Activated T-helper 2 cell treated with anti-CD3 and anti-CD28 coated beads, Interferon-gamma antibody, Interleukin-2, Interleukin-4, amounts not matched to agents 10 μg/mL and 5 μg/mL and 100 μg/mL, durations not matched to agents 14 hours and 24 hours and 36 hours (primary cell): ENCODE measurements at regions of chr17 and their contacts with region 1.

Region 1: GRCh38 chr17:2592971-2593820 is at the start of gene PAFAH1B1:
- DNase-seq: peak; percentile 93
- H3K4me3 Mint-ChIP-seq: peak within 1 kb of the TSS; percentile 94
- H3K27ac Mint-ChIP-seq: peak within 1 kb of the TSS; percentile 91
- H3K4me1 Mint-ChIP-seq: peaks cover 26% of the 10 kb centered on the region
- H3K27me3 Mint-ChIP-seq: peaks cover 3% of the 10 kb centered on the region
- total RNA-seq, gene PAFAH1B1: 151 and 153 TPM in 2 replicates

Region 2: DNA sequence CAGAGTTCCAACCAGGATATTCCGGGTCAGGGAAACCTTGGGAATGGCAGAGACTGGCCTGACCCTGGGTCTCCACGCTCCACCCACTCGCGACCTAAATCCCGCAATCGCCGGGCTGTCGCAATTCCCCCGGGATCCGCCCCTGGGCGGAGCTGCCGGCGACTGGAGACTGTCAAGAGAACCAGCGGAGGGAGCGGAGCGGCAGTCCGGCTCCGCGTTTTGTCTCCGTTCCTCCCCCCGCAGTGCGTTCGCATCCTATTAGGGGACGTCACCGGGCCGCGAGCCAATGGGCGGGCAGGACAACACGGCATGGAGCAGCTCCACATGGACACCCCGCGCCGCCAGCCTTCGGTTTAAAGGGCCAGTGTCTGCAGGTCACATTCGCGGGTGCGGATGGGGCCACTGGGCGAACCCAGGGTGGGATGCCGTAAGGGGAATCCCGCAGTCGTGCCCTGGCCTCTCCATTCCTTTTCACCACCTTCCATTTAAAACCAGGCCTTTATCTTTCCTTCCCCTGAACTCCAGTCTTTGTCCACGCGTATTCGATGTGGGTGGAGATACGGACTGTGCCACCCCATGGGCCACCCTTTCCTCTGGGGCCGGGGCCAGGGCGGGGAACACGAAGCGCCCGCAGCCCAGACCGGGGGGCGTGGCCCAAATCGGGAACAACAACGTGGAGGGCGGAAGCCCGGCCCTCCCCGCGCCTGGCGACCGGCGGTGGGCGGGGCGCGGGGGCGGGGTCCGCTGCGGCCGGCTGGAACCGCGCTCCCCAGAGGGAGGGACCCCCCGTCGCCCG is 191.6 kb before region 1 on chr17:
- intact Hi-C with region 1: loop called (anchors 5 kb)
- DNase-seq: peak; percentile 99
- H3K4me3 Mint-ChIP-seq: peak overlapping the region; percentile 89
- H3K27ac Mint-ChIP-seq: peak overlapping the region; percentile 97
- H3K4me1 Mint-ChIP-seq: peaks cover 44% of the 10 kb centered on the region
- H3K27me3 Mint-ChIP-seq: no peaks in the 10 kb centered on the region

Region 3: GRCh38 chr17:2511462-2512369 is 81.5 kb before region 1 on chr17 and contains the start of gene METTL16:
- intact Hi-C with region 1: loop called (anchors 2 kb)
- DNase-seq: peak; percentile 96
- H3K4me3 Mint-ChIP-seq: no peak within 1 kb of the TSS
- H3K27ac Mint-ChIP-seq: no peak within 1 kb of the TSS
- H3K4me1 Mint-ChIP-seq: peaks cover 17% of the 10 kb centered on the region
- H3K27me3 Mint-ChIP-seq: peaks cover 2% of the 10 kb centered on the region
- total RNA-seq, gene METTL16: 49.1 and 49.2 TPM in 2 replicates

Region 4: DNA sequence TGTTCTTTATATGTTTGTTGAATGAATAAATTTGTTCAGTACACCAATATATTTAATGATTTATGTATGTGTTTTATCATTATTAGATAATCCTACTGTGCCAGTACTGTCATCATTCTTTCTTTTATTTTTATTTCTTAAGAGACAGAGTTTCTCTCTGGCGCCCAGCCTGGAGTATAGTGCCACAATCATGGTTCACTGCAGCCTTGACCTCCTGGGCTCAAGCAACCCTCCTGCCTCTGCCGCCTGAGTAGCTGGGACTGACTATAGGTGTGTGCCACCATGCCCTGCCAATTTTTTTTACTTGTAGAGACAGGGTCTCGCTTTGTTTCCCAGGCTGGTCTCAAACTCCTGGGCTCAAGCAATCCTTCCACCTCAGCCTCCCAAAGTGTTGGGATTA is 42.0 kb after region 1 on chr17:
- intact Hi-C with region 1: loop called (anchors 5 kb)
- DNase-seq: no peak
- H3K4me3 Mint-ChIP-seq: no peak overlapping the region
- H3K27ac Mint-ChIP-seq: no peak overlapping the region
- H3K4me1 Mint-ChIP-seq: peaks cover 28% of the 10 kb centered on the region
- H3K27me3 Mint-ChIP-seq: no peaks in the 10 kb centered on the region

Region 5: DNA sequence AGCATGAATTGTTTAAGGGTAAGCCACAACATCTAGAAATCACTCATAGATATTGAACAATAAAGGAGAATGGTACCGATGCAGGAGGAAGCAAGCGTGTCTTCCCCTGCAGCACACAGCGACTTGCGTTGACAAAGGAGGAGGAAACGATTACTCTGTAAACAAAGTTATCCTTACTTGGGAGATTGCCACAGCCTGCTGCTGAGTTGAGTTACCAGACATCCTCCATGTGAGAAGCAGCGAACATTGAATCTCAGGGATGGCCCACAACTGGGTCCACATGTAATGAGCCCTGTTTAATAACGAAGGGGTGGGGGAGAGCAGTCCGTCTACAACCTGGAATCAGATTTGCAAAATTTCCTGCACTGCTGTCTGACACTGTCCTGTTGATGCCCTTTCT is 90.7 kb after region 1 on chr17:
- intact Hi-C with region 1: loop called (anchors 5 kb)
- DNase-seq: no peak
- H3K4me3 Mint-ChIP-seq: no peak overlapping the region
- H3K27ac Mint-ChIP-seq: no peak overlapping the region
- H3K4me1 Mint-ChIP-seq: no peaks in the 10 kb centered on the region
- H3K27me3 Mint-ChIP-seq: no peaks in the 10 kb centered on the region

Region 6: GRCh38 chr17:2710803-2711600 is 117.8 kb after region 1 on chr17:
- intact Hi-C with region 1: no loop called
- DNase-seq: no peak
- H3K4me3 Mint-ChIP-seq: peak overlapping the region; percentile 92
- H3K27ac Mint-ChIP-seq: peak overlapping the region; percentile 85
- H3K4me1 Mint-ChIP-seq: peaks cover 30% of the 10 kb centered on the region
- H3K27me3 Mint-ChIP-seq: no peaks in the 10 kb centered on the region